Activated B cell treated with CpG ODN at 0.5 μM for 24 hours (primary cell): ENCODE measurements at regions of chr1 and their contacts with region 1.

Region 1: DNA sequence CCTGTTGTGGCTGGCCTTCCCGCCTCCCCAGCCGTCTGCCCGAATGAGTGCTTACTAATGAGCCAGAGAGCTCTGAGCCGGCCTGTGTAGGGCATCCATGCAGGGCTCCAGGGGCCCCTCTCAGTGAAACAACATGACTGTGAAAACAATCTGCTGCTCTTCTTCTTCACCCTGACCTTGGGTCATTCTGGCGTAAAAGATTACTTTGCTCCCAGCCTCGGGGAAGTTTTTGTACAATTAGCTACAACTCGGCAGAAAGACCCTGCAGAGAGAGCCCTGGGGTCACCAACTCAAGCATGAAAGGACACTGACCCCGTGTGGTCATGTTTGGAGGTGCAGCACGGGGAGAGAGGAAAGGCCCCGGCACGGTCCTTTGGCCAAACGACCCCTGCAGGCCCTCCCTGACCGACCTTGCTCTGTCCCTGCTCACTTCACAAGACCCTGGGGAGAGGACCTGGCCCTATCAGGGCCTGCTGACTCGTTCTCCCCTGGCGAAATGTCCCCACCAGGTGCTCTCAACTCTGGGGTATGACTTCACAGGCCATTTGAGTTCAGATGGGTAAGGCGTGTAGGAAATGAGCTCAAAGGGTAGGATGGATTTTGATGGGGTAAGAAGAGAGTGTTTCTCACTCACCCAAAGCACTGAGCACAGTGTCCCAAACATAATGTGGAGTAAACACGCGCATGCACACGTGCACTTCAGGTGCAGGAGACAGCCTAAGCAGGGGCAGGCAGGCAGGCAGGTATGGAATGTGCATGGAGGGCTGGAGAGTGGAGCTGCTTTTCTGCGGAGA is 22.9 kb upstream of the FAM20B start:
- DNase-seq: peak; percentile 79
- ATAC-seq: peak; percentile 95
- H3K4me3 Mint-ChIP-seq: peak overlapping the region; percentile 26
- H3K27ac Mint-ChIP-seq: no peak overlapping the region
- H3K4me1 Mint-ChIP-seq: peaks cover 15% of the 10 kb centered on the region
- H3K27me3 Mint-ChIP-seq: no peaks in the 10 kb centered on the region
- CTCF ChIP-seq: peak; percentile 96

Region 2: GRCh38 chr1:178300352-178300699 is 702.4 kb before region 1 on chr1:
- CTCF ChIA-PET with region 1: interaction called, 11 read pairs
- POLR2A ChIA-PET with region 1: no interaction called
- intact Hi-C with region 1: no loop called
- DNase-seq: no peak
- ATAC-seq: no peak
- H3K4me3 Mint-ChIP-seq: no peak overlapping the region
- H3K27ac Mint-ChIP-seq: no peak overlapping the region
- H3K4me1 Mint-ChIP-seq: no peaks in the 10 kb centered on the region
- H3K27me3 Mint-ChIP-seq: peaks cover 6% of the 10 kb centered on the region
- CTCF ChIP-seq: no peak

Region 3: DNA sequence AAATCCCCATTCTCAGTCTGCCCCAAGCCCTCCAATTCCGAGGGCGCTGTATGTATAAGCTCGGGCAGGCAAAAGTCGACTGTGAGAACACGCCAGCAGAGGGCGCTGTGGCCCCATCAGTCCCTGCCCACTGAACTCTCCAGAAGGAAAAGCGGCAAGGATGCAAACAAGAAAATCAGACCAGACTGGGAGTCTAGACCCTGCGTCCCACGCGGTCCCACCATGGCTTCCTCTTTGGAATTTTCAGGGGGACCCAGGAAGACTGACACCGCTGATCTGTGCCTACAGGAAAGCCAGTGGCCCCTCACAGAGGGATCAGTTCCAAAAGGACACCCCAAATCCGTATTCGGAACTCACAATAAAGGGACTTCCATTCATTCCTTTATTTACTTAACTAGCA is 470.4 kb before region 1 on chr1:
- CTCF ChIA-PET with region 1: interaction called, 207 read pairs
- POLR2A ChIA-PET with region 1: interaction called, 8 read pairs
- intact Hi-C with region 1: loop called (anchors 1 kb)
- DNase-seq: peak; percentile 77
- ATAC-seq: peak; percentile 93
- H3K4me3 Mint-ChIP-seq: no peak overlapping the region
- H3K27ac Mint-ChIP-seq: no peak overlapping the region
- H3K4me1 Mint-ChIP-seq: peaks cover 4% of the 10 kb centered on the region
- H3K27me3 Mint-ChIP-seq: no peaks in the 10 kb centered on the region
- CTCF ChIP-seq: peak; percentile 84

Region 4: DNA sequence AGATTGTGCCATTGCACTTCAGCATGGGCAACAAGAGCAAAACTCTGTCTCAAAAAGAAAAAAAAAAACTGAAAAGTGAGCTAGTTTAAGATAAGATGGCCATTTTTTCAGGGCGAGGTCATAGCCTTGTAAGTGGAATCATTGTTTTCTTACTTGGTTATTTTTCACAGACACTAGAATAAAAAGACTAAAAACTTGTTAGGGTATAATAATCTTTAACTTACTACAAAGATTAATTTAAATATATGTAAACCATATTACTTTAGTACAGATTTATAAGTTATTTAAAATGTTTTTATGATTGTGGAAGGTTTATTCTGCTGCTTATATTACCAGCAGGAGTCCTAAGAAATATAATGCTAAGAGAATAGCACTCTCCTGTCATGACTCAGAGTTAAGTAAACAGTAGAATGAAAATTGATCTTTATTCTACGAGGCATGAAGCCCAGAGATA is 155.3 kb before region 1 on chr1:
- CTCF ChIA-PET with region 1: no interaction called
- POLR2A ChIA-PET with region 1: no interaction called
- intact Hi-C with region 1: loop called (anchors 1 kb)
- DNase-seq: no peak
- ATAC-seq: no peak
- H3K4me3 Mint-ChIP-seq: no peak overlapping the region
- H3K27ac Mint-ChIP-seq: peak overlapping the region; percentile 24
- H3K4me1 Mint-ChIP-seq: no peaks in the 10 kb centered on the region
- H3K27me3 Mint-ChIP-seq: no peaks in the 10 kb centered on the region
- CTCF ChIP-seq: no peak

Region 5: DNA sequence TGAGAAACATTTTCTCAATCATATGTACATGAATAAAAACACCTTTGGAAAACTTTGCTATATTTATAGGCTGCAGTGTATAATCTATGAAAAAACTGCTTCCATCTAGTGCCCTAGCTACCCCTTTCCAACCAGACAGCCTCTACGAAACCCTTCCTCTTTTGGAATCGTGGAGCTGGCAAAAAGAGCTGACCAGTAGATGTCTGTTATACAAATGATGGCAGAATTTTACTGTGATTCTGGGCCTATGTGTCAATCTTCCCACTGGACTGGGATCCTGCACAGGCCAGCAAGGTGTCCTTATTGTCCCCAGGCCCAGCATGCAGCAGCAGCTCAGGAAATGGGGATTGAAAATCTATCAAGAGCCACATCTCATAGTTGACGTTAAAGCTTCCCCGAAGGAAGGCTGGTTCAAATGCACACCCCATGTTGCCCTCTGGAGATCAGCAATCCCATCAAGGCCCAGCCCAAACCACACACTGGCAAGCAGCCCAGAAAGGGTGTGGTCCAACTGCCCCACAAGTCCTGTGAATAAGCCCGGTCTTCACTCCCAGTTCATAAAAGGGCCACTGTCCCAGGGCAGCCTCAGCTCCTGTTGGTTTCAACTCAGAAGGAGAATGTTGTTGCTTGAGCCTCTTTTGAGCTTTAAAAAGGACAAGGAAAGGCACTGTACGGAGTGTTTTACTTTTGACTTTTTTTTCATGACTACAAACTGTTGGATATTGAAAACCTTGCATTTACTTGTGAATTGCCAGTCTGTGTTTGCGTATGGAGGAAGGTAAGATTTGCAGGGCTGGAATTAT is 14.2 kb after region 1 on chr1:
- CTCF ChIA-PET with region 1: interaction called, 10 read pairs
- POLR2A ChIA-PET with region 1: no interaction called
- intact Hi-C with region 1: no loop called
- DNase-seq: no peak
- ATAC-seq: no peak
- H3K4me3 Mint-ChIP-seq: no peak overlapping the region
- H3K27ac Mint-ChIP-seq: no peak overlapping the region
- H3K4me1 Mint-ChIP-seq: no peaks in the 10 kb centered on the region
- H3K27me3 Mint-ChIP-seq: no peaks in the 10 kb centered on the region
- CTCF ChIP-seq: no peak

Region 6: DNA sequence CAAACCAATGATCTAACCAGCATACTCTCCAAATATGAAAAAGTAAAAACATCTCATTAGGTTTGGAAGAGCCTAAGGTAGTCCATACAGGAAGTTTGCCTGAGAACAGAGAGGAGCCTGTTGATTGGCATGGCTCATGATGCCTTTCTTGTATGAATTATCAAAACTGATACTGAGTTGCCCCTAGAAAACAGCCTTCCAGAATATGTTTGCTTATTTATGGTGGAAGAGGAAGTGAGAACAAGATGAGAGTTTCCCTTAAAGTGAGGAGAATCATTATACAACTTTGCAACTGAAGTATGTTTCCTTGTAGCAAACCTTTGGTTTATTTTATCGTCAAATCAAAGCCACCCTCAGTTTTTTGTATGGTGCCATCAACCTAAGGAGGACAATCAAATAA is 1886.1 kb after region 1 on chr1:
- CTCF ChIA-PET with region 1: no interaction called
- POLR2A ChIA-PET with region 1: no interaction called
- intact Hi-C with region 1: no loop called
- DNase-seq: no peak
- ATAC-seq: peak; percentile 31
- H3K4me3 Mint-ChIP-seq: no peak overlapping the region
- H3K27ac Mint-ChIP-seq: no peak overlapping the region
- H3K4me1 Mint-ChIP-seq: peaks cover 16% of the 10 kb centered on the region
- H3K27me3 Mint-ChIP-seq: no peaks in the 10 kb centered on the region
- CTCF ChIP-seq: no peak